Left ventricle myocardium inferior (tissue), 1 donor: ENCODE measurements at regions of chr4 and their contacts with region 1.

Region 1: DNA sequence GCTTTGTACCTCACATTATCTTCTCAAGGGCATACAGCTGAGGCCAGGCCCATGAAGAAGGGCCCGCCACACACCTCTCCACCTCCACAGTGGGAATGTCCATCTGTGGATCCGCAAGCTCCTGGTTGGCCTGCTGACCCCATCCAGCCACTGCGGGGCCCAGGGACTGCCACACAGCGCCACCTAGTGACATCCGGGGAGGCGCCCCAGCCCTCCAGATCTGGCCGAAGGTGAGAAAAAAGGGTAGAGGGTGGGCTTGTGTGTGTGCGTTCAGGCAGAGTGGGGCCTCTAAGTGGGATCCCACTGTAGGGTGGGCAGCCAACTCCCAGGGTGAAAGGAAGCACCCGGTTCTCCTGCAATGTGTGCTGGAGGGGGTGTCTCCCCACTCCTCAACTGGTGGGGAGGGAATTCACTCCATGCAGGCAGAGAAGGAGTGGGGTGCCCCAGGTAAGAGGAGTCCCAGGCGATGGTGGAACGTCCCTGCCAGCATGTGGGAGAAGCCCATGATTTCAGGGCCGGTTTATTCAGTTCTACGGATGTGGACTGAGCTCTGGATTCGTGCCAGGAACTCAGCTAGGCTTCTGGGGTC is 117.3 kb downstream of the ENPP6 start:
- DNase-seq: peak; percentile 72
- H3K4me3 ChIP-seq: no peak overlapping the region
- H3K27ac ChIP-seq: no peak overlapping the region
- H3K4me1 ChIP-seq: peaks cover 31% of the 10 kb centered on the region
- H3K27me3 ChIP-seq: no peaks in the 10 kb centered on the region
- CTCF ChIP-seq: peak; percentile 92

Region 2: GRCh38 chr4:183840311-183840710 is 260.1 kb before region 1 on chr4:
- intact Hi-C with region 1: loop called (anchors 2 kb)
- DNase-seq: peak; percentile 78
- H3K4me3 ChIP-seq: no peak overlapping the region
- H3K27ac ChIP-seq: no peak overlapping the region
- H3K4me1 ChIP-seq: peaks cover 40% of the 10 kb centered on the region
- H3K27me3 ChIP-seq: no peaks in the 10 kb centered on the region
- CTCF ChIP-seq: peak; percentile 91

Region 3: DNA sequence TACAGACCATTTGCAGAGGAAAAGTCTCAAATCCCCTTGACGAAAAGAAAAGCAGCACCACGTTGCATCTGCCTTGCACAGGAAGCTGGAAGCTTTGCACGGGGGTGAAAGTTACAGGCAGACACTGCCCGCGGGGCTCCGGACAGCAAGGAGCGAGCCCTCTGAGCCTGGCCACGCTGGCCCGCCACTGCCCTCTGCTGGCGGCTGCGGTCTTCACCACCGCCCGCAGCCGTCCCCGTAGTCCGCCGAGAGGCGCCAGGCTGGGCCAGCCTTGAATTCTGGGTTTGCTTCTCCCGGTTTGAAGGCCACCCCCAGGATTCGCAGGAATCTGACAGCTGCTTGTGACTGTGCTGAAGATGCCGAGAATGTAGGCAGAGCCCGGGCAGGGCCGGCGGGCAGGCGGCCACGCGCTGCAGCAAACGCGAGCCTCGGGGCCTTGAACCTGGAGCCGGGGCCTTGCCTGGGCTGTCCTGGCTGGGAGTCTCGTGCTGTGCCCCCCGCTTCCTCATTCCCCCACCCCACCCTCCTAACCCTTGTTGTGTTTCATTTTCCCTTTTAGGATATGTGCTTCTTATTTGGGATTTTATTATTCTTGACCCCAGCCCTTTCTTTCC is 68.1 kb after region 1 on chr4:
- intact Hi-C with region 1: loop called (anchors 10 kb)
- DNase-seq: peak; percentile 76
- H3K4me3 ChIP-seq: peak overlapping the region; percentile 22
- H3K27ac ChIP-seq: no peak overlapping the region
- H3K4me1 ChIP-seq: peaks cover 7% of the 10 kb centered on the region
- H3K27me3 ChIP-seq: peaks cover 12% of the 10 kb centered on the region
- CTCF ChIP-seq: peak; percentile 98

Region 4: GRCh38 chr4:184616633-184617551 is 516.5 kb after region 1 on chr4:
- intact Hi-C with region 1: no loop called
- DNase-seq: no peak
- H3K4me3 ChIP-seq: no peak overlapping the region
- H3K27ac ChIP-seq: no peak overlapping the region
- H3K4me1 ChIP-seq: no peaks in the 10 kb centered on the region
- H3K27me3 ChIP-seq: no peaks in the 10 kb centered on the region
- CTCF ChIP-seq: no peak